HEK293T (cell line): ENCODE measurements at regions of chr12 and their contacts with region 1.

Region 1: DNA sequence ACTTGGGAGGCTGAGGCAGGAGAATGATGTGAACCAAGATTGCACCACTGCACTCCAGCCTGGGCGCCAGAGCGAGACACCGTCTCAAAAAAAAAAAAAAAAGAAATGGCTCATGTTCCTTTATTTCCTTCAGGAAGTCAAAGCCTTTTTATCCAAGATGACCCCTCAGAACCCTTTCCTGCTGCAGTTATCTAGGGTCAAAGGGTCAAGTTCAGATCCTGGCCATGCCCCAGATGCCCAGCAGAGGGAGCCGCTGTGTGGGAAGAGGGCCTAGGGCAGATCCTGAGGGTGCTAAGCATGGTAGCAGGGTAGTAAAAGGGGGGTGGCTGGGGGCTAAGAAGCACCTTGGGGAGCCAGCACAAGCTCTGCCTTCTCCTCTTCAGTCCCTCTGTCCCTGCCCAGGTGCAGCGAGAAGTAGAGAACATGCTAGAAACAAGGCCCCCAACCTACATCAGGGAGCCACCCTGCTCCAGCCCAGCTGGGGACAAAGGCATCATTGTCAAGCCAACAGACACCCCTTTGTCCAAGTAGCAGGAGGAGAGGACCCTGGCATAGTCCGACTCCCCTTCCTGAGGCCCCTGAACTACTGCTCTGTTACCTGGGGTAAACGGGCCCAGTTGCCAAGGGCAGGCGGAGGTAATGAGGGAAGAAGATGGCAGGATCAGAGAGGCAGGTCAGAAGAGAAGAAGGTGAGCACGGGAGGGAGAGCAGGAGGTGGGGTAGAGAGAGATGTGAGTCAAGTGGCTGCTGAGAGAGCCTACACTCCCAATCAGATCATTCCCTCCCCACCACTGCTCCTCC is 6.5 kb downstream of the NFE2 start:
- DNase-seq: peak; percentile 66

Region 2: DNA sequence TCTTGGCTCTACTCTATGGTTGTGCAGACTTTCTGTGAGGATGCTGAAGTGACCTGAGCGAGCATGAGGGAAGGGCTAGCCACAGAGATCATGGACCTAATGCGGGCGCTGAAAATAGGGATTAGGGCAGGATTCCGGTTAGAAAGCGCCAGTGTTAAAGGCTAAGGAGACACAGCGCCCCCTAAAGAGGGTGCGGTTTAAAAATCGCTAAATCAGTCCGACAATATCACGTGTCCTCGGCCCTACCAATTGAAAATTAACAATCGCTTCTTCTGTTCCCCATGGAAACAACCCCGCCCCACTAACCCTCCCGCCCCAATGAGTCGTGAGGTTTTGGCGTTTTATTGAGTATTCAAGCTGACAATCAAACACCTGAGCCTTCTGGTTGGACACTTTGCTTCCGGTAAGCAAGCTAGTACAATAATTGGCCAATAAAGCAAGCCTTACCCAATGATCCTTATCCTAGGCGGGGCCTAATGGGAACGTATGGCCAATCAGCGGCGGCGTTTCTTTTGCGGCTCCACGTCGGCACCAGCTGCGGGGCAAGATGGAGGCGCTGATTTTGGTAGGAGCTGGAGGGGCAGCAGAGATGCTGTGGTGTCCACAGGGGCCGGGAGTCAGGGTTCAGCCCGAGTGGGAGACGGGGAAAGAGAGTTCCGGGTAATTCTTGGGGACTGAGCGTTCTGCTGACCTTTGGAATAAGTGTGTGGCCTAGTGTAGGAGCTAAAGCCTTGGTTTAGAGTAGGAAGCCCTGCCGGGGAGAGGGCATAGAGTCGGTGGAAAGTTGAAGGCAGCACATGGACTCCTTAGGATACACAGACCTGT is 30.5 kb after region 1 on chr12 and contains the start of gene COPZ1:
- CTCF ChIA-PET with region 1: interaction called, 21 read pairs
- POLR2A ChIA-PET with region 1: interaction called, 12 read pairs
- DNase-seq: peak; percentile 91

Region 3: DNA sequence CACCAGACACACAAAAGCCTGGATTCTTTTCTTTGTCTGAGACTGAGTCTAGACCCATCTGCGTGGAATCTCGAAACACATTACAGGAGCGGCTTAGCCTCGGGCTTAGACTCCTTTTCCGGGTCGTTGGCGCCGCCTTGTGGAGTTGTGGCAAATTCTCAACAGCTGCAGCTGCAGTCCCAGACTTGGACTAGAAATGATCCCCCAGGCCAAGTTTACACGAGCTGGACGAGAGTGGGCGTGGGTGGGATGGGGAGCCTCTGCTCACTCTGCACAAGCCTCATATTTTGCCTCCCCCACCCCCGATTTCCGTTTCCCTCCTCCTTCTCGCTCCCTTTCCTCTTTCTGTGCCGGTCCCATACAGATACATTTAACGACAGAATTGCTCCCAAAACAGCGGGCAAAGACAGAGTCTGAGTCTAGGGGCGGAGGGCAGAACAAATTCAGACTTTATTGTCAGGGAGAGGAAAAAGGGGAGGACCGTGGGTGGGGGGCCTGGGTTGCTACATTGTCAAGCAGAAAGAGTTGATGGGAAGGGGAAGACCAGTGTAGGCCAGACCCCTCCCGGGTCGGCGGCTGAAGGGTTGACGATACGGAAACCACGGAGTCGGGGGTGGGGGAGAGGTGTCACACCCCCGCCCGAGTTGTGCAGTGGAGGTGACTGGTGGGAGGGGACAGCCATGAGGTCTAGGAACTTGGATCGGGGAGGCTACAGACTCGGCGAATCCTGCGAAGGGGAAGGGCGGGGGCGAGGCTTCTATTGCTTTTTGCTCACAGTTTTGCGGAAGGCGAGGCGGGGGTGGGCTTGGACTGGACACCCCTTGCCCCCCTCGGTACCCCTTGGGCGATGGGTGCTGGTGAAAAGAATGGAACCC is 74.6 kb after region 1 on chr12:
- CTCF ChIA-PET with region 1: interaction called, 10 read pairs
- POLR2A ChIA-PET with region 1: no interaction called
- DNase-seq: peak; percentile 76